CD4-positive, alpha-beta T cell (primary cell): ENCODE measurements at regions of chr12 and their contacts with region 1.

Region 1: GRCh38 chr12:131104463-131105350 is 151.0 kb downstream of the ADGRD1 start:
- DNase-seq: peak; percentile 72 to 86 (median 78)
- ATAC-seq: peak; percentile 49
- H3K4me3 ChIP-seq: no peak overlapping the region
- H3K4me3 Mint-ChIP-seq: peak overlapping the region; percentile 56
- H3K27ac ChIP-seq: no peak overlapping the region
- H3K27ac Mint-ChIP-seq: peak overlapping the region; percentile 71
- H3K4me1 ChIP-seq: peaks cover 22% of the 10 kb centered on the region
- H3K4me1 Mint-ChIP-seq: peaks cover 16% of the 10 kb centered on the region
- H3K27me3 ChIP-seq: peaks cover 0 to 4% of the 10 kb centered on the region in 2 experiments
- H3K27me3 Mint-ChIP-seq: no peaks in the 10 kb centered on the region
- CTCF ChIP-seq: peak; percentile 85

Region 2: GRCh38 chr12:131116391-131117117 is 11.8 kb after region 1 on chr12:
- CTCF ChIA-PET with region 1: interaction called, 13 read pairs
- POLR2A ChIA-PET with region 1: no interaction called
- intact Hi-C with region 1: no loop called
- DNase-seq: no peak
- ATAC-seq: no peak
- H3K4me3 ChIP-seq: no peak overlapping the region
- H3K4me3 Mint-ChIP-seq: no peak overlapping the region
- H3K27ac ChIP-seq: no peak overlapping the region
- H3K27ac Mint-ChIP-seq: no peak overlapping the region
- H3K4me1 ChIP-seq: no peaks in the 10 kb centered on the region
- H3K4me1 Mint-ChIP-seq: no peaks in the 10 kb centered on the region
- H3K27me3 ChIP-seq: peaks cover 0 to 4% of the 10 kb centered on the region in 2 experiments
- H3K27me3 Mint-ChIP-seq: no peaks in the 10 kb centered on the region
- CTCF ChIP-seq: no peak

Region 3: GRCh38 chr12:131132118-131132892 is 27.6 kb after region 1 on chr12:
- CTCF ChIA-PET with region 1: interaction called, 35 read pairs
- POLR2A ChIA-PET with region 1: interaction called, 6 read pairs
- intact Hi-C with region 1: loop called (anchors 1 to 2 kb)
- DNase-seq: peak; percentile 58 to 78 (median 66)
- ATAC-seq: peak; percentile 71
- H3K4me3 ChIP-seq: no peak overlapping the region
- H3K4me3 Mint-ChIP-seq: no peak overlapping the region
- H3K27ac ChIP-seq: no peak overlapping the region
- H3K27ac Mint-ChIP-seq: no peak overlapping the region
- H3K4me1 ChIP-seq: peaks cover 6% of the 10 kb centered on the region
- H3K4me1 Mint-ChIP-seq: no peaks in the 10 kb centered on the region
- H3K27me3 ChIP-seq: no peaks in the 10 kb centered on the region
- H3K27me3 Mint-ChIP-seq: no peaks in the 10 kb centered on the region
- CTCF ChIP-seq: peak; percentile 80

Region 4: DNA sequence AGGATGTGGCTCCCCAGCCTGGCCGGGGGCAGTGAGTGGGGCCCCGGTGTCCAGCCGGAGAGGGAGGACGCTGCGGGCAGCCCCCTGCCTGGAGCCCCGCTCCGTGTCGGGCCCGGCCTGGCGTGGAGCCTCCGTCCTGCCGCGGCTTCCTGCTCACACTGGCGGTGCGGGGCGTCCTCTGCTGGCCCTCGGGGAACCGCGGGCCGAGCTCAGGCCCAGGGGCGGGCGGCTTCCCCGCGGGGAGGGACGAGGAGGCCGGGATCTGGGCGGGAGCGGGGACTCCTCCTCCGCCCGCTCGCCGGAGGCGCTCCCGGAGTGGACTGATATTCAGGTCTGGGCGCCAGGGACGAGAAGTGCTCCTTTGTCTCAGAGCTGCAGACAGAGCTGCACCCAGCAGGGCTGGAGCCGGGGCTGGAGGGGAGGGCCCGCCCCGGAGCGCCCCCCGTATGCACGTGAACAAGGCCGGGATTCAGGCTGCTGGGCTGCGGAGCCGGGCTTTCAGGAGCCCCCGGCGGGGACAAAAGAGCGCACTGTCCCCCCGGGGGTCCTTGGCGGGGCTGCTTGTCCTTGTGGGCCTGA is 725.7 kb after region 1 on chr12:
- CTCF ChIA-PET with region 1: no interaction called
- POLR2A ChIA-PET with region 1: no interaction called
- intact Hi-C with region 1: loop called (anchors 10 kb)
- DNase-seq: peak in 5 of 14 experiments; percentile 25 to 64 (median 46)
- ATAC-seq: peak; percentile 21
- H3K4me3 ChIP-seq: peak overlapping the region; percentile 44
- H3K4me3 Mint-ChIP-seq: peak overlapping the region; percentile 78
- H3K27ac ChIP-seq: no peak overlapping the region
- H3K27ac Mint-ChIP-seq: no peak overlapping the region
- H3K4me1 ChIP-seq: peaks cover 28% of the 10 kb centered on the region
- H3K4me1 Mint-ChIP-seq: peaks cover 13% of the 10 kb centered on the region
- H3K27me3 ChIP-seq: peaks cover 30 to 45% of the 10 kb centered on the region in 2 experiments
- H3K27me3 Mint-ChIP-seq: peaks cover 51% of the 10 kb centered on the region
- CTCF ChIP-seq: no peak

Region 5: DNA sequence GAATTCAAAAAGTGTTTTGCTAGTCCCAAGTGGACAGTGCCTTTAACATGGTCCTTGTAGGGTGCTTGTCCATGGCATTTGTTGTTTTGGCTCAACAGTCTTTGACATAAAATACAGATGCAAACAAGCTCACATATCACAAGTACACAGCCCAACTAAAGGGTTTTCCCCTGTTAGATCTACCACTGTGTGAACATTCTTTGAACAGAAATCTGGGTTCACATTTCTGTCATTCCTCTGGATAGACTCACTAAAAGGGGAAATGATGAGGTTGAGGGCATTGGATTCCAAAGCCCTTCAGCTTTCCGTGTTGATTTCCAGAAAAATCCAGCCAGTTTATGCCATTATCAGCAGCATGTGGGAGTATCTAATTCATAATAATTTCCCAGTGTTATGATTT is 899.1 kb after region 1 on chr12:
- CTCF ChIA-PET with region 1: no interaction called
- POLR2A ChIA-PET with region 1: no interaction called
- intact Hi-C with region 1: loop called (anchors 2 to 5 kb)
- DNase-seq: no peak
- ATAC-seq: no peak
- H3K4me3 ChIP-seq: no peak overlapping the region
- H3K4me3 Mint-ChIP-seq: no peak overlapping the region
- H3K27ac ChIP-seq: no peak overlapping the region
- H3K27ac Mint-ChIP-seq: no peak overlapping the region
- H3K4me1 ChIP-seq: no peaks in the 10 kb centered on the region
- H3K4me1 Mint-ChIP-seq: no peaks in the 10 kb centered on the region
- H3K27me3 ChIP-seq: no peaks in the 10 kb centered on the region
- H3K27me3 Mint-ChIP-seq: no peaks in the 10 kb centered on the region
- CTCF ChIP-seq: no peak